Vagina (tissue), 2 donors: ENCODE measurements at regions of chr12 and their contacts with region 1.

Region 1: DNA sequence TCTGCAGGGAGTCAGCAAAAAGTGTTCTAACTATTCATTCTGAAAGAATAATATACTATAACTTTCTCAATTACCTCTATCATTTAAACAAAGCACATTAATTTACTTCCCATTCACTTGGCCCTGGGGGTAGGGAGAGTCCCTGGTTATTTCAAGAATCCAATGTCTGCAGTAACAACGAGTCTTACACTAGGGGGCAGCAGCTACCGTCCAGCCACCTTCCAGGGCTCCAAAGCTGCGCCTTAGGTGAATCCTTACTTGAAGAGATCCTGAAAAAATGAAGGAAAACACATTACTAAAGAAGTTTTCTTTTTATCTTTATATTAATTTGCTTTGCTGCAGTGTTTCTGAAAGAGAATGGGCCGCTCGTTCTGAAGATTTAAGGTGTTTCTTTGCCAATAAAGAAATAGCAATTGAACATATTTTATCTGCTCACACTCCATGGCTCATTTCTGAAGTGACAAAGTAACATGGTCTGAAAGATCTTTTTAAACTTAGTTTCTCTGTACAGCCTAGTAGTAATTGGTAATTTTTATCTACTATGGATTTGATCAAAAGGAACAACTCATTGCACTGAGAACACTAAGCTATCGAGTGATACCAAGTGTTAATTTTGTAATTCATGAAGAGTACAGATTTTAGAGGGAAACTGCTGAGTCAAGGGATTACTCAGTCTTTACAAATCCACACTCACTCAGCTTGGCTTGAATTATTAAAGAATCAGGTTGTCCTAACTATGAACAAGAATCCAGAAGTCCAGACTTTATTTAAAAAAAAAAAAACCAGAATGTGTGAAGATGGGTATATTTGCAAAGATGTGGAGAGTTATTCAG is 27.6 kb downstream of the BHLHE41 start:
- DNase-seq: no peak
- H3K4me3 ChIP-seq: no peak overlapping the region
- H3K27ac ChIP-seq: no peak overlapping the region
- H3K4me1 ChIP-seq: no peaks in the 10 kb centered on the region
- H3K27me3 ChIP-seq: no peaks in the 10 kb centered on the region
- CTCF ChIP-seq: peak; percentile 79 to 93 (median 80)
- POLR2A ChIP-seq: no peak

Region 2: DNA sequence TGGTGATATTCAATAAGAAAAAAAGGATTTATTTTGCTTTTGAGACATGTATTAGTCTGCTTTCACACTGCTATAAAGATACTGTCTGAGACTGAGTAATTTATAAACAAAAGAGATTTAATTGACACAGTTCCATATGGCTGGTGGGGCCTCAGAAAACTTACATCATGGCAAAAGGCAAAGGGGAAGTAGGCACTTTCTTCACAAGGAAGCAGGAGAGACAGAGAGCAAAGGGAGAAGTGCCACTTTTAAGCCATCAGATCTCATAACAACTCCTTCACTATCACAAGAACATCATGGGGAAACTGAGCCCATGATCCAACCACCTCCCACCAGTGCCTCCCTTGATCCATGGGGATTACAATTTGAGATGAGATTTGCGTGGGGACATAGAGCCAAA is 16.4 kb before region 1 on chr12:
- intact Hi-C with region 1: no loop called
- DNase-seq: no peak
- H3K4me3 ChIP-seq: no peak overlapping the region
- H3K27ac ChIP-seq: no peak overlapping the region
- H3K4me1 ChIP-seq: no peaks in the 10 kb centered on the region
- H3K27me3 ChIP-seq: no peaks in the 10 kb centered on the region
- CTCF ChIP-seq: no peak
- POLR2A ChIP-seq: no peak

Region 3: GRCh38 chr12:26389348-26389747 is 292.1 kb after region 1 on chr12:
- intact Hi-C with region 1: no loop called
- DNase-seq: no peak
- H3K4me3 ChIP-seq: no peak overlapping the region
- H3K27ac ChIP-seq: no peak overlapping the region
- H3K4me1 ChIP-seq: no peaks in the 10 kb centered on the region
- H3K27me3 ChIP-seq: no peaks in the 10 kb centered on the region
- CTCF ChIP-seq: no peak
- POLR2A ChIP-seq: no peak

Region 4: GRCh38 chr12:26651566-26652188 is 554.4 kb after region 1 on chr12:
- intact Hi-C with region 1: loop called (anchors 10 kb)
- DNase-seq: no peak
- H3K4me3 ChIP-seq: no peak overlapping the region
- H3K27ac ChIP-seq: no peak overlapping the region
- H3K4me1 ChIP-seq: no peaks in the 10 kb centered on the region
- H3K27me3 ChIP-seq: no peaks in the 10 kb centered on the region
- CTCF ChIP-seq: peak; percentile 28 to 73 (median 43)
- POLR2A ChIP-seq: no peak